ENCODE measurements at regions of chr2 and their contacts with region 1.

Region 1: GRCh38 chr2:149611099-149611820 is 23.7 kb upstream of the MMADHC start:
- ATAC-seq: peak in 7 of 8 experiments; percentile 40 to 77 (median 64)
- H3K4me3 ChIP-seq: no peak overlapping the region
- H3K27ac ChIP-seq: no peak overlapping the region
- H3K4me1 ChIP-seq: no peaks in the 10 kb centered on the region

Region 2: GRCh38 chr2:148594198-148594597 is 1017.1 kb before region 1 on chr2:
- in situ Hi-C with region 1: no loop called
- ATAC-seq: no peak
- H3K4me3 ChIP-seq: no peak overlapping the region
- H3K27ac ChIP-seq: no peak overlapping the region
- H3K4me1 ChIP-seq: no peaks in the 10 kb centered on the region

Region 3: GRCh38 chr2:149715005-149715592 is 103.8 kb after region 1 on chr2:
- in situ Hi-C with region 1: loop called in 2 of 9 experiments (anchors 10 to 25 kb)
- ATAC-seq: peak in 3 of 8 experiments; percentile 88 to 96 (median 96)
- H3K4me3 ChIP-seq: no peak overlapping the region
- H3K27ac ChIP-seq: no peak overlapping the region
- H3K4me1 ChIP-seq: peaks cover 0 to 1% of the 10 kb centered on the region in 2 donors